Right lobe of liver (tissue), 6 donors: ENCODE measurements at regions of chr2 and their contacts with region 1.

Region 1: DNA sequence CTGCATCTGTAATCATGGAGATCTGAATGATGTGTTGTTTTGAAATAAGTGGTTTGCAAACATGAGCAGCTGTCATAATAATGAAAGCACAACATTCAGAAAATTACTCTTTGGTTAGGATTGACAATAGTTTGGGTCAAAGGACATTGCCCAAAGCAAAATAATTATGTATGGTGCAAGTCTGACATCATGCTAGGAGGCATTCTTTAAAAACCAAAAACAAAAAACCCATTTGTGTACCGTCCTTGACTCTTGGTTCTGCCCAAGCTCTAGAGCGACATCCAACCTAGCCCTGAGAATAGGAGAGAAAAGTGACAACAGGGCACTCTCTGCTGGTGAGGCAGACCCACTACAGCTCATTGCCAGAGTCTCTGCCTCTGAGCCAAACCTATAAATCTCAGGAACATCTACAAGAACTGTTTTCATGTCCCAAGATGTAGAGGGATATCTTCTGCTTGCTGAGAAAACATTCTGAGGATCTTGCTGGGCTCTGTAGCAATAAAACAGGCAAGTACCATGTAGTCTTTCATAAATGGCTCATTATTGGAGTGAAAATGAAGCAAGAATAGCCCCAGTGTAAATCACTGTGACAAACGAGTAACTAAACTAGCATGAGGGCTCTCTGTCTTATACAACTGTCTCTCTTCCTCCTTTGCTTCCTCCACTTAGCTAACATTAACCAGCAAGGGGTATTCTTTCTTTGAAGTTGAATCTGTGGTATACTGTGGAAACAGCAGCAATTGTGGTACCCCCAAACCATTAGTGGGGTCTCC is 266.8 kb upstream of the CXCR4 start:
- DNase-seq: no peak
- ATAC-seq: peak; percentile 63 to 88 (median 78)
- H3K4me3 ChIP-seq: no peak overlapping the region
- H3K27ac ChIP-seq: no peak overlapping the region
- H3K4me1 ChIP-seq: no peaks in the 10 kb centered on the region
- H3K27me3 ChIP-seq: no peaks in the 10 kb centered on the region
- CTCF ChIP-seq: peak; percentile 37 to 46 (median 42)
- POLR2A ChIP-seq: no peak

Region 2: DNA sequence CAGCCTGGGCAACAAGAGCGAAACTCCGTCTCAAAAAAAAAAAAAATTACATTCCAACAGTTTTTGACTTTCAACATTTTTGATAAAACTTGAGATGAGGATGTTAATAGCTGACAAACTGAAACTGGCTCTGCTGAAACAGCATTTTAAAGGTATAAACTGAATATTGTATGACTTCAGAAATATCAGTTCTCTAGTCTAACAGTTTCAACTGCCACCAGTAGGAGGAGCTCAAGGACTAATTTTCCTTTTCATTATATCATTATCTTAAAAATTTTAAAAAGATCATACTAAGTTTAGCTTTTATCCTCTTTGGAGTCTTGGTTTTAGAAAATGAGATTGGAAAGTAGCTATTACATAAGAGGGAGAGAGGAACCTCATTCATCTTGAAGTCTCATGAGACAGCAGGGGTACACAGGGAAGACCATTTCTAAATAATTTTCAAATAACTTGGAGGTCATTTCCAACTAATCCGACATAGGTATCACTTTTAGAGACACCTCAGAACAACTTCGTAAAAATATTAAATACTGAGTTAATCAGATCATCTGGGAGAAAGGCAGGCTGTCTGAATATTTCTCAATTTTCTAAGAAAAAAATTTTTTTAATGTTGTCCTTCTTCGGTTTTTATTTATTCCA is 470.9 kb before region 1 on chr2:
- intact Hi-C with region 1: loop called in 1 of 2 experiments (anchors 10 kb)
- DNase-seq: no peak
- ATAC-seq: peak; percentile 38 to 65 (median 55)
- H3K4me3 ChIP-seq: no peak overlapping the region
- H3K27ac ChIP-seq: no peak overlapping the region
- H3K4me1 ChIP-seq: no peaks in the 10 kb centered on the region
- H3K27me3 ChIP-seq: no peaks in the 10 kb centered on the region
- CTCF ChIP-seq: peak; percentile 64 to 75 (median 67)
- POLR2A ChIP-seq: no peak